Mammary epithelial cell (primary cell): ENCODE measurements at regions of chr12 and their contacts with region 1.

Region 1: DNA sequence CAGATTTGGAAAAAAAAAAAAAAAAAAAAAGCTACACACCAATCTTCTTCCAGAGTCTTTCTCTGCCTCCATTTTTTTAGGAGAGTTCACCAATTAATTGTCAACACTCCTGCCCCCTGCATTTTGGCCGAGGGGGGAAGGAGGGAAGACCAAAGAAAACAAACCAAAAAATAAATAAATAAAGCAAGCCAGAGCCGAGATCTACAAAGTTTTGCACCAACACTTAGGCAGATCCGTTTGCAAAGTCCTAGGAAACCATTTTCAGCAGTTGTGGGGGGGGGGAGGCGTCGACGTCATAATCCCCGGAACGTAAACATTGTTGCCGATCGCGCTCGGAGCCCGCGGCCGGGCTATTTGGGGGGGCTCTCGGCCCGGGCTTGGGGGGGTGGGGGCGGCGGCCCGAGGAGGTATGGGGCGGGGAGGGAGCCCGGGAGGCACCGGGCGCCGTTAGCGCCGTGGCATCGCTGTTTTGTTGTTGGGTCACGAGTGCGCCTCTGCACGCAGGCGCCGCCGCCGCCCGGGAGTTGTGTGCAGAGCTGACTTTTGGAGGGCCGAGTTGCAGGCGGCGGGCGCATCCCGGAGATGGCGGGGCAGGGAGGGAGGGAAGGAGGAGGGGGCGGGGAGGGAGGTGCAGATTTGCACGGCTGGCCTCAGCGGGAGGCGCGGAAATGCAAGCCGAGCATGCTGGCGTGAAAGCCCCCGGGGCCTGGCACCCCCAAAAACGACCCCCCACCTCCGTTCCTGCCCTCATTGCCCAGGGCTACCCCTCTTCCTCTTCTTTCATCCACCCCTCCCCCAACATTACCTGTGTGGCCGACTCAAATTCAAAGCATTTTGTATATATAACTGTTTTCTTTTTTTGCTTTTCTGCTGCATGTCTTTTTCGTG is 598 bp downstream of the KDM2B start:
- DNase-seq: peak; percentile 33
- H3K4me3 ChIP-seq: peak overlapping the region; percentile 59 to 84 (median 61)
- H3K27ac ChIP-seq: peak overlapping the region; percentile 20
- H3K4me1 ChIP-seq: peaks cover 21% of the 10 kb centered on the region
- H3K27me3 ChIP-seq: no peaks in the 10 kb centered on the region
- CTCF ChIP-seq: no peak

Region 2: GRCh38 chr12:121128970-121129810 is 451.0 kb before region 1 on chr12:
- CTCF ChIA-PET with region 1: no interaction called
- dilution Hi-C with region 1: no loop called
- in situ Hi-C with region 1: no loop called
- intact Hi-C with region 1: no loop called
- DNase-seq: no peak
- H3K4me3 ChIP-seq: no peak overlapping the region
- H3K27ac ChIP-seq: no peak overlapping the region
- H3K4me1 ChIP-seq: peaks cover 14% of the 10 kb centered on the region
- H3K27me3 ChIP-seq: no peaks in the 10 kb centered on the region
- CTCF ChIP-seq: no peak

Region 3: DNA sequence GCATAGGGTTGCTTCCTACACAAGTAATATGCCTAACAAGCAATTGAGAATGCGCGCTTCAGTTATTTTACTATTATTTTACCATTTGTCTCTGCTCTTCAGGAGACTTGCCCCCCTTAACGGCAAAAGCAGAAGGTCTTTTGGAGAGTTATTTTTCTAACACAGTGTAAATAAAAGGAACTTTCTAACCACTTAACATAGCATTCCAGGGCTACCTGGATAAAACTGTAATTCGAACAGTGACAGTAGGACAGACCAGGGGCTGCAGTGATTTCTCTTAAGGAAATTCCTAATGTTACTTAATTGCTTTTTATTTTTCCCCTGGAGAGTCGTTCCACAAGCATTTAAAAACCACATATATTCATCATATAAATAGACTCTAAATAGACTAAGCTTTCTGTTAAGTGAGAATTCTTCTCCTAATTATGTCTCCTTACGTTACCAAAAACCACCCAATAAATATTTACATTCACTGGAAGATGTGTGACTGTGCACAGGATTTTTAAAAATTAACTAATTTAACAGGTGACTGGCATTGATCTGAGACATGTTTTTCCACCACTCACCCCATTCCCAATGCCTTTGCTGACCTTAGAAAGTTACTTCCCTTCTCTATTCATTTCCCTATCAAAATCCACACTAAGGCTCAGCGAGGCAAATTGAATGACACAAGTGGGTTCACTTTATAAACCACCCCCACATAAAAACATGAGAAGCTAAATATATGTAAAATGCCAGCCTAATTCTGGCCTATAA is 107.9 kb before region 1 on chr12:
- CTCF ChIA-PET with region 1: no interaction called
- dilution Hi-C with region 1: loop called (anchors 5 kb)
- in situ Hi-C with region 1: no loop called
- intact Hi-C with region 1: no loop called
- DNase-seq: no peak
- H3K4me3 ChIP-seq: no peak overlapping the region
- H3K27ac ChIP-seq: no peak overlapping the region
- H3K4me1 ChIP-seq: peaks cover 5% of the 10 kb centered on the region
- H3K27me3 ChIP-seq: no peaks in the 10 kb centered on the region
- CTCF ChIP-seq: no peak

Region 4: DNA sequence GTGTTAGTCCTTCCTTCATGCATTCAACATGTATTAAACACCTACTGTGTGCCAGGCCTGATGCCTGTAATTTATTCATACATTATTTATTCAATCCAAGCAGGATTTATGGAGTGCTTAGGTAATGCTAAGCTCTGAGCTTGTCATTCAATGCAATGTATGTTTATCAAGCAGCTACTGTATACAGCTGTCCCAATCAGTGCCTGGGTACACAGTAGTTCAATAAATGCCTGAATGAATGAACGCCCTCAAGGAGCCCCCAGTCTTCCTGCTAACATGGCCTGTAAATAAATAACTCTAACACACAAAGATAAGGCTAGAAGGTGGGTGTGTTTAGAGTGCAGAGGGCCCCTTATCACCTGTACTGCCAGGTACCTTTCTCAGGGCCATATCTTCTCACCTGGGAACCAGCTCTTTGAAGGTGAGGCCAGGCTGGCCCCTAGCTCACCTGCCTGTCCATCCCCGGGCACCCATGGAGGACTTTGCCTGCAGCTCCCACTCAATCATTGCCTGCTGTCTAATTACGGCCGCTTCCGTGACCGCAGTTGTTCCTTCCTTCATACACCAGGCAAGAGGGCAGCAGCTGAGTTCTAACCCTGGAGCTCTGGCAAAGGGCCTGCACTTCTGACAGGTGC is 20.6 kb after region 1 on chr12:
- CTCF ChIA-PET with region 1: no interaction called
- dilution Hi-C with region 1: no loop called
- in situ Hi-C with region 1: no loop called
- intact Hi-C with region 1: no loop called
- DNase-seq: no peak
- H3K4me3 ChIP-seq: no peak overlapping the region
- H3K27ac ChIP-seq: no peak overlapping the region
- H3K4me1 ChIP-seq: no peaks in the 10 kb centered on the region
- H3K27me3 ChIP-seq: no peaks in the 10 kb centered on the region
- CTCF ChIP-seq: no peak

Region 5: DNA sequence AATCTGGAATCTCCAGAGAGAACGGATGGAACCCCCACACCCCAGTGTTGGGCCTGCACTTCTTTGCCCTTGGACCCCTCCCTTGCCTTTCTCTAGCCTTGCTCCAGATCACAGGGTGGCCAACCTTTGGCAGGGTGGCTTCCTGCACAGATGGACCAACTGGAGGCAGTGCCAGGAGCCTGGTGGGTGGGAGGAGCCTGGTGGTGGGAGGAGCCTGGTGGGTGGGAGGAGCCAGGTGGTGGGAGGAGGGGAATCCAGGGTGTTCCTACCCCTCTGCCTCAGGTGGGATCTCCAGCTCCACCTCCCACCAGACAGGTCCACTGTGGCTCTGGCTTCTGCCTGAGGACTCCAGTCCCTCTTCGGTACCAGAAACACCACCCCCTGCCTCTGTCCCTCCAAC is 31.1 kb after region 1 on chr12:
- CTCF ChIA-PET with region 1: no interaction called
- dilution Hi-C with region 1: no loop called
- in situ Hi-C with region 1: no loop called
- intact Hi-C with region 1: no loop called
- DNase-seq: no peak
- H3K4me3 ChIP-seq: no peak overlapping the region
- H3K27ac ChIP-seq: no peak overlapping the region
- H3K4me1 ChIP-seq: no peaks in the 10 kb centered on the region
- H3K27me3 ChIP-seq: no peaks in the 10 kb centered on the region
- CTCF ChIP-seq: no peak

Region 6: GRCh38 chr12:121637231-121637914 is 57.1 kb after region 1 on chr12:
- CTCF ChIA-PET with region 1: no interaction called
- dilution Hi-C with region 1: loop called (anchors 5 kb)
- in situ Hi-C with region 1: no loop called
- intact Hi-C with region 1: no loop called
- DNase-seq: no peak
- H3K4me3 ChIP-seq: no peak overlapping the region
- H3K27ac ChIP-seq: no peak overlapping the region
- H3K4me1 ChIP-seq: no peaks in the 10 kb centered on the region
- H3K27me3 ChIP-seq: no peaks in the 10 kb centered on the region
- CTCF ChIP-seq: no peak